ENCODE measurements at regions of chr1 and their contacts with region 1.

Region 1: DNA sequence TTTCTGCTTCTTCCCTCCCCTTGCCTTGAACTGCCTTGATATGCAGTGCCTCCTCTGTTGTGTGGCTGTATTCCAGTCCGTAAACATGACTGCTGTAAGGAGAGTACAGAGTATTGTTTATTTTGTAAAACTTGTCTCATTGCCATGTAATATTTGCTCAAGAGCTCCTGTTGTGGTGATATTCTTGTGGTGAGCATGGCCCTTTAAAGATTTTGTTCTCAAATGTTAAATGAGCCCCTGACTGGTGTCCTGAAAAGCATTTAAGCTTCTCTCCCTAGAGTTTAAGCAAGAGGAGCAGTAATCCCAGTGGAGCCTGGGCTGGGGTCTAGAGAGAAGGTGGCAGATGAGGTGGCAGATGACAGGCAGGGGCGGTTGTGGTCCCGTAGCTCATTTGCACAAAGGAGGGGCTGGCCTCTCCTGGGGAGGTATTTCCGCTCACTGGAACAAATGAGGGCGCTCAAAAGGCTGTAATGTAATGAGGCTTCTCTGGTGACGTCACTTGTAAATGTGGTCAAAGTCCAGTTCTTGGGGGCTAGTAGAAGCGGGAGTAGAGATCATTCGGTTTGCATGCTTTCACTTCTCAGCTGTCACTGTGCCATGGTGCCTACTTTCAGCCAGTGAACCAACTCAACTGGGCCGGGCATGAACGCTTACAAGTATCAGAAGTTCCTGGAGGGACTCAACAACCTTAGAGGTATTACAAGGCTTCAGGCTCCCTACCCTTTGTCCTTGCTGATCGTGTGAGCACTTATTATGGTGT is 46.0 kb upstream of the MACF1 start:
- DNase-seq: peak; percentile 49
- H3K4me3 Mint-ChIP-seq: peak overlapping the region; percentile 70
- H3K27ac Mint-ChIP-seq: peak overlapping the region; percentile 82
- H3K4me1 Mint-ChIP-seq: peaks cover 59% of the 10 kb centered on the region
- H3K27me3 Mint-ChIP-seq: no peaks in the 10 kb centered on the region
- CTCF ChIP-seq: no peak

Region 2: GRCh38 chr1:39110325-39110851 is 48.1 kb before region 1 on chr1:
- CTCF ChIA-PET with region 1: interaction called, 6 read pairs
- POLR2A ChIA-PET with region 1: interaction called, 21 read pairs
- intact Hi-C with region 1: no loop called
- DNase-seq: peak; percentile 82
- H3K4me3 Mint-ChIP-seq: peak overlapping the region; percentile 30
- H3K27ac Mint-ChIP-seq: no peak overlapping the region
- H3K4me1 Mint-ChIP-seq: peaks cover 20% of the 10 kb centered on the region
- H3K27me3 Mint-ChIP-seq: no peaks in the 10 kb centered on the region
- CTCF ChIP-seq: no peak

Region 3: GRCh38 chr1:39132505-39133339 is 25.8 kb before region 1 on chr1:
- CTCF ChIA-PET with region 1: interaction called, 7 read pairs
- POLR2A ChIA-PET with region 1: interaction called, 44 read pairs
- intact Hi-C with region 1: loop called (anchors 2 kb)
- DNase-seq: peak; percentile 77
- H3K4me3 Mint-ChIP-seq: peak overlapping the region; percentile 10
- H3K27ac Mint-ChIP-seq: peak overlapping the region; percentile 85
- H3K4me1 Mint-ChIP-seq: peaks cover 52% of the 10 kb centered on the region
- H3K27me3 Mint-ChIP-seq: no peaks in the 10 kb centered on the region
- CTCF ChIP-seq: peak; percentile 14

Region 4: GRCh38 chr1:39142401-39143151 is 15.9 kb before region 1 on chr1:
- CTCF ChIA-PET with region 1: interaction called, 5 read pairs
- POLR2A ChIA-PET with region 1: interaction called, 42 read pairs
- intact Hi-C with region 1: no loop called
- DNase-seq: peak; percentile 87
- H3K4me3 Mint-ChIP-seq: no peak overlapping the region
- H3K27ac Mint-ChIP-seq: peak overlapping the region; percentile 49
- H3K4me1 Mint-ChIP-seq: peaks cover 36% of the 10 kb centered on the region
- H3K27me3 Mint-ChIP-seq: no peaks in the 10 kb centered on the region
- CTCF ChIP-seq: no peak

Region 5: GRCh38 chr1:39170731-39171667 is 12.5 kb after region 1 on chr1:
- CTCF ChIA-PET with region 1: interaction called, 3 read pairs
- POLR2A ChIA-PET with region 1: interaction called, 10 read pairs
- intact Hi-C with region 1: no loop called
- DNase-seq: no peak
- H3K4me3 Mint-ChIP-seq: no peak overlapping the region
- H3K27ac Mint-ChIP-seq: peak overlapping the region; percentile 50
- H3K4me1 Mint-ChIP-seq: peaks cover 32% of the 10 kb centered on the region
- H3K27me3 Mint-ChIP-seq: no peaks in the 10 kb centered on the region
- CTCF ChIP-seq: no peak

Region 6: DNA sequence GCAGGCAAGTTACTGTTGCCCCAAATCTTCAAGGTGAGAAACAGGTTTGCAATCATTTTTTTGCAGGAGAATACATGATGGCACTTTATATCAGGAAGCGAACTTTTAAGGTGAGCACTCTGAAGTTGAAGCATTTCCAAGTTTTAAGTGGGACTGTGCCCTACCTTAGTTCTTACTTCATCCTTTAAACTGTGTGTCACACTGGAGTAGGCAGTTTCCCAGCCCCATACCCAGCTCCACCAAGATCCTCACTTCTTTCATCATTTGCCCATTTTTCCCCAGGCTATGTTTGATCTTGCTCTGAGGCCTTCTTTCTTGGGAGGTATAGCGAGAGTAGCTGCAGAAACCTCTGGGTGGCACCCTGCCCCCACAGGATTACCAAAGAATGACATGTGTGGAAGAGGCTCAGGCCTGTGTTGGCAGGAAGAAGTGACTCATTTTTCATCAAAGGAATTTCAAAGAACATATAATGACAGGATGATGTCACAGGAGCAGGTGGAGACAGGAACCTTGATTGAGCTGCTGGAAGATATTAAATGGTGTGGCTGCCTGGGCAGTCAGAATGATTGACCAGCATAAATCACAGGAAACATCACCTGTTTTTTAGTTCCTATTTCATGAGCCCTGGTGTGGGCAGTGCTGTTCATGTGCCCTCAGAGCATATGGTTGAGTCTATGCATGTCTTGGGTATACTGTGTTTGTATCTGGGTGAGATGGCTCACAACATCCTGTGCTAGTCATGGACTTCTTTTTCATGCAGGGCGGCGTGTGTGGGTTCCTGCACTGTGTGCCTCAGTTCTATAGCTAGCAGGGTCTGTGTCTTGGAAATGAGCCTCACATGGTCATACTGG is 25.2 kb after region 1 on chr1:
- CTCF ChIA-PET with region 1: interaction called, 22 read pairs
- POLR2A ChIA-PET with region 1: interaction called, 24 read pairs
- intact Hi-C with region 1: no loop called
- DNase-seq: peak; percentile 98
- H3K4me3 Mint-ChIP-seq: peak overlapping the region; percentile 53
- H3K27ac Mint-ChIP-seq: peak overlapping the region; percentile 88
- H3K4me1 Mint-ChIP-seq: peaks cover 52% of the 10 kb centered on the region
- H3K27me3 Mint-ChIP-seq: no peaks in the 10 kb centered on the region
- CTCF ChIP-seq: peak; percentile 29

Region 7: GRCh38 chr1:39189592-39190041 is 31.1 kb after region 1 on chr1:
- CTCF ChIA-PET with region 1: interaction called, 46 read pairs
- POLR2A ChIA-PET with region 1: interaction called, 27 read pairs
- intact Hi-C with region 1: no loop called
- DNase-seq: no peak
- H3K4me3 Mint-ChIP-seq: no peak overlapping the region
- H3K27ac Mint-ChIP-seq: peak overlapping the region; percentile 96
- H3K4me1 Mint-ChIP-seq: peaks cover 56% of the 10 kb centered on the region
- H3K27me3 Mint-ChIP-seq: no peaks in the 10 kb centered on the region
- CTCF ChIP-seq: no peak